Activated CD4-positive, alpha-beta T cell treated with anti-CD3 and anti-CD28 coated beads, Interleukin-2, amount 10 ng/mL, durations not matched to agents 7 days and 5 days (primary cell): ENCODE measurements at regions of chr15 and their contacts with region 1.

Region 1: GRCh38 chr15:33309602-33310276 is 1.0 kb upstream of the RYR3 start:
- DNase-seq: no peak
- H3K4me3 Mint-ChIP-seq: no peak overlapping the region
- H3K27ac Mint-ChIP-seq: no peak overlapping the region
- H3K4me1 Mint-ChIP-seq: no peaks in the 10 kb centered on the region
- H3K27me3 Mint-ChIP-seq: peaks cover 52% of the 10 kb centered on the region

Region 2: GRCh38 chr15:33341953-33342352 is 32.2 kb after region 1 on chr15:
- CTCF ChIA-PET with region 1: no interaction called
- POLR2A ChIA-PET with region 1: interaction called, 11 read pairs
- DNase-seq: no peak
- H3K4me3 Mint-ChIP-seq: no peak overlapping the region
- H3K27ac Mint-ChIP-seq: no peak overlapping the region
- H3K4me1 Mint-ChIP-seq: no peaks in the 10 kb centered on the region
- H3K27me3 Mint-ChIP-seq: peaks cover 7% of the 10 kb centered on the region